Activated CD4-positive, alpha-beta T cell treated with anti-CD3 and anti-CD28 coated beads, Interleukin-2, amount 10 ng/mL, durations not matched to agents 24 days and 14 days (primary cell): ENCODE measurements at regions of chr19 and their contacts with region 1.

Region 1: DNA sequence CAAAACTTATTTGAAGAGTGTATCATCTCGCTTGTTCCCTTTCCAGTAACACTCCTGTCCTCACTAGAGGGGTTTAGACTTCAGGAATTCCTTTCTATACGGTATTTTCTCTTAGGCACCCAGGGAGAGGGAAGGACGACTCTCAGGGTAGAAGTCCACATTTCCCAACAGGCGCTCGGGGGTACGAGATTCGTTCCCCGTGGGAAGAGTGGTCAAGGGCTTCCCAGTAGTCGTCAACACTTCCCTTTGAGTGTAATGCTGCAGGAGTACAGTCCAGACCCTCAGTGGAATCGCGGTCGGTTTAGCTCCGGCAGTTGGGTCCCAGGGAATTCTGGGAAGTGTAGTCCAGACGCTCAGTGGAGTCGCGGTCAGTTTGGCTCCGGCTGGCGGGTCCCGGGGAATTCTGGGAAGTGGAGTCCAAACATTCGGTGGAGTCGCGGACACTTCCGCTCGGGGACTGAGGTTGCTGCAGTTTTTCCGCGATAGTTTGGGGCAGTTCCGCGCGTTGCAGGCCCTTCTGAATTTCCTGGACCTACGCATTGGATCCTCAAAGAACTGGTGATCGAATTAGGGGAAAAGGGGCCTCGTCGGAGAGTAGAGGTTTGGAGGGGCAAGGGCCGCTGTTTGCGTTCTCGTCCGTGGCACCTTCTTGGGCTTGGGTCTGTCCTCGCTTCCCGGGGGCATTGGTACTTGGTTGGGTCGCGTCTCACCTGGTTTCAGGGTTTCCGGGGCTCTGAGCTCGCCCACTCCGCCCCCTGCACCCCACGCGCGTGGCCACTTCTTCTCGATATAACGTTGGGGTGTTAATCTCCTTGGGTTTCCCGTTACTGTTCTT is at the start of gene ZNF224:
- DNase-seq: peak; percentile 94
- H3K4me3 Mint-ChIP-seq: peak within 1 kb of the TSS; percentile 98
- H3K27ac Mint-ChIP-seq: peak within 1 kb of the TSS; percentile 91
- H3K4me1 Mint-ChIP-seq: peaks cover 14% of the 10 kb centered on the region
- H3K27me3 Mint-ChIP-seq: no peaks in the 10 kb centered on the region
- total RNA-seq, gene ZNF224: 17.0 and 17.4 TPM in 2 replicates

Region 2: DNA sequence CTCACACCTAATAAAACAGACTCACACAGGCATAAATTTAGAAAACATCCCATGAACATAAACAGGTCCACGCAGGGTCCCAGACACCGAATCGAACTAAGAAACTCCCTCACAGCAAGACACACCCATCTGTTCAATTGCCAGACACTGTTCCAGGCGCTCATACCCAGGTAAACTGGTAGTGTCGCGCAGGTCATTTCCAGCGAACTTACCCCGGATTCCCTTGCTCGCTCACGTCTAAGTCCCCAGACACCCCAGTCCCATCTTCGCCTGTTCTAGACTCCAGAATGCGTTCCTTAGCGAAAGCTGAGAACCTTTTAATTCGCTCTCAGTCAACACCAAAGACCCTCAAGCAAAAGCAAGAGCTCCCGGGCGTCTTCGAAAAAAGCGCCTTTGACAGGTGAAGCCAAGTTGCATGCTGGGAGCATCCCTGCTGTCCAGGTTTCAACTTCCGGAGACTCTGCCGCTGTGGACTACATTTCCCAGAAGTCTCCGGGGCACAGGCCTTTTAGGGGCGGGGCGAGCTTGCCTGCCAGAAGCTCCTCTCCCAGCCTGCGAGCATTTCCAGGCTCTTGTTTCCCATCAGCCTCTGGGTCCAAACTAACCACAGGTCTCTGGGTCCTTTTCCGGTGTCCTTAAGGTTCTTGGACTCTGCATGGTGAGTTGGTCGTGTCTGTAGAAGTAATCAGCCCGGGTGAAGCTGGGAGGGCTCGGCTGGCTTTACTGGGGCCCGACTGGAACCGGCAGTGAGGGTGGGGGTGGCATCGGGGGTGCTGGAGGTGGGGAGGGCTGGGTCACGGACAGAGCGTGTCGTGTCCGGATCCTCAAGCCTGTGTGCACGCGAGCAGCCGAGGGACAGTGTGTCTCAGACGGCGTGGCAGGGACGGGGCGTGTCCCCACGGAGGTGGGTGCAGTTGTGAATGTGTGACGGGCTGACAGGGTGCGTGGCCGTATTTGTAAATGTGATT is 267.1 kb before region 1 on chr19 and contains the start of gene ZNF283:
- intact Hi-C with region 1: loop called (anchors 2 kb)
- DNase-seq: peak; percentile 95
- H3K4me3 Mint-ChIP-seq: peak within 1 kb of the TSS; percentile 87
- H3K27ac Mint-ChIP-seq: peak within 1 kb of the TSS; percentile 42
- H3K4me1 Mint-ChIP-seq: peaks cover 13% of the 10 kb centered on the region
- H3K27me3 Mint-ChIP-seq: peaks cover 11% of the 10 kb centered on the region
- total RNA-seq, gene ZNF283: 4.0 and 5.7 TPM in 2 replicates

Region 3: GRCh38 chr19:43983912-43984686 is 110.0 kb before region 1 on chr19 and contains the start of gene ZNF155:
- intact Hi-C with region 1: loop called (anchors 1 kb)
- DNase-seq: peak; percentile 91
- H3K4me3 Mint-ChIP-seq: peak within 1 kb of the TSS; percentile 97
- H3K27ac Mint-ChIP-seq: peak within 1 kb of the TSS; percentile 93
- H3K4me1 Mint-ChIP-seq: peaks cover 8% of the 10 kb centered on the region
- H3K27me3 Mint-ChIP-seq: no peaks in the 10 kb centered on the region
- total RNA-seq, gene ZNF155: 4.6 and 6.6 TPM in 2 replicates

Region 4: DNA sequence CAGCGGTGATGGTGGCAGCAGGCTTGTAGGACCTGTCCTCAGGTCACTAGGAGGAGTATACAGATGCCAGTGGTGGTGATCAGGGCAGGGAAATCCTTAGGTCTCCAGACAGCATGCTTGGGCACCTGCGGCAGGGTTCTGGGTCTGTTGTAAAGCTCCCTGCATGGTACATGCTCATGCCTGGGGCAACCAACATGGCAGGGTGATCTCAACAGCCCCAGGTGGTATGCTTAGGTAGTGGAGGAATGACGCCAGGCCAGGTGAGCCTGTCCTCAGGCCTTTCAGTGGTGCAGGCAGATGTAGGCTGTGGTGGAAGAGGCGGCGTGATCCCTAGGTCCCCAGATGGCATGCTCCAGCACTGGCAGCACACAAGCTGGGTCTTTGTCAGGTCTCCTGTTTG is 10.3 kb before region 1 on chr19:
- intact Hi-C with region 1: no loop called
- DNase-seq: no peak
- H3K4me3 Mint-ChIP-seq: no peak overlapping the region
- H3K27ac Mint-ChIP-seq: no peak overlapping the region
- H3K4me1 Mint-ChIP-seq: no peaks in the 10 kb centered on the region
- H3K27me3 Mint-ChIP-seq: no peaks in the 10 kb centered on the region

Region 5: DNA sequence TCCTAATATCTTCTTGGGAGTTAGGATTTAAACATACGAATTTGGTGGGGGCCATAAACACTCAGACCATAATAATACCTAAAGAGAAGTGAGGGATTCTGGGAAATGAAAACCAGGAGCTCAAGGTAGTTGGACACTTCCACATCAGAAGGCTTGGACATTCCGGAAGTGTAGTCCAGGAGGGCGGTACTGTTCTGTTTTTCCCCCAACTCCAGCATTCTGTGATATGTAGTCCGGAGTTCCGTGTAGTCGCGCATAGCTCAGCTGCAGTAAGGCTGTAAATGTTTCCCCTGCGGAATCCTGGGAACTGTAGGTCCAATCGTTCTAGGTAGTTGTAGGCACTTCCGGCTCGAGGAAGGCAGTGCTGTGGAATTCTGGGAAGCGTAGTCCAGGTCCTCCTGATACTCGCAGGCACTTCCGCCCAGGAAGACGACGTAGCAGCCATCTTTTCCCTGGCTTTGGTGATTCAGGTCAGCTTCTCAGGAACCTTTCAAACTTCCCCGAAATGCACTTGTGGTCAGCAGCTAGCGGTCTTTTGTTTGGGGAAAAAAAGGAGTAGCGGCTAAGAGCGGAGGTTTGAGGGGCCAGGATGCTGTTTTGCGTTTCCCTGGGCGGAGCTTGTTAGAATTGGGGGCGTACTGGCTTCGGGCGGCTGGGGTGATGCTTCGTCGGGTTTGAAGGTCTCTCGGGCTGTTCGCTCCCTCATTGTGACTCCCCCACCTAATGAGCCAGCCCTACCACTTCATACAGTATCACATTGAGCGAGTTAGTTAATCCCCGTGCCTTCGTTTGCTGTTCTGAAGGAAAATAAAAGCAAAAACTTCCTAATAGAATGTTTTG is 70.7 kb after region 1 on chr19 and contains the start of gene ZNF226:
- intact Hi-C with region 1: loop called (anchors 5 kb)
- DNase-seq: peak; percentile 93
- H3K4me3 Mint-ChIP-seq: peak within 1 kb of the TSS; percentile 98
- H3K27ac Mint-ChIP-seq: peak within 1 kb of the TSS; percentile 96
- H3K4me1 Mint-ChIP-seq: peaks cover 26% of the 10 kb centered on the region
- H3K27me3 Mint-ChIP-seq: no peaks in the 10 kb centered on the region
- total RNA-seq, gene ZNF226: 10.4 and 12.3 TPM in 2 replicates

Region 6: GRCh38 chr19:44304659-44305193 is 210.6 kb after region 1 on chr19 and contains the start of gene ZNF235:
- intact Hi-C with region 1: loop called (anchors 1 kb)
- DNase-seq: peak; percentile 90
- H3K4me3 Mint-ChIP-seq: peak within 1 kb of the TSS; percentile 90
- H3K27ac Mint-ChIP-seq: peak within 1 kb of the TSS; percentile 83
- H3K4me1 Mint-ChIP-seq: peaks cover 11% of the 10 kb centered on the region
- H3K27me3 Mint-ChIP-seq: no peaks in the 10 kb centered on the region
- total RNA-seq, gene ZNF235: 2.8 and 3.1 TPM in 2 replicates